ENCODE measurements at regions of chr6 and their contacts with region 1.

Region 1: DNA sequence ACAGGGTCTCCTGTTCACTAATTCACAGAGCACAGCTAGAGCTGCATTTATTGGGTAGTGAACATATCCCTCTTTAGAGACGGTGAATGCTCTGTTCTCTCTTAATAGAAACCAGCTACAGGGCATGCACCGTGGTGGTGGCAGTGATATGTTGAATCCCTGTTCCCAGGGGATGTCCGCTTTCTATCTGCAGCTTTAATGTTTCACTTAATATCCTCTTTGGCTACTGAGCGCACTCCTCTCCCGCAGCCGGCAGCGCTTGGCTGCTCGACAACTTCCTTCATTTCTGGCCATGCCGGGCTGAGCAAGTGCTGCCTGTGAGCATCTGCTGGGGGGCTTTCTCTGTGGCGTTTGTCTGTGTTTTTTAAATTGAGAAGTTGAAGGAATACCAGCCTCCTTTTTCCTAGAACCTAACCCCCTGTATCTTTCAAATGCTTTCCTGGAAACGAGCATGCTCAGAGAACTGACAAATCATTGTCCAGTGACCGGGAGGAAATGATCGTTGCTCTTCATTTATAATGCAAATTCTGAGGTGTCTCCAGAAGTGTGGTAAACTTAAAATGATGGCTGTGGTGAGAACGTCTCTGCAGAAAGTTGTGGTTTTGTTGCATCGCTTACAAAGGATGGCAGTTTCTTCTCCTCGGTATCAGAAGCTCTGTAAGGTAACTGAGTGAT is 297.9 kb downstream of the UTRN start:
- DNase-seq: peak; percentile 58
- H3K4me3 Mint-ChIP-seq: peak overlapping the region; percentile 82
- H3K27ac Mint-ChIP-seq: peak overlapping the region; percentile 91
- H3K4me1 Mint-ChIP-seq: peaks cover 55% of the 10 kb centered on the region
- H3K27me3 Mint-ChIP-seq: no peaks in the 10 kb centered on the region

Region 2: GRCh38 chr6:144349690-144350527 is 233.2 kb before region 1 on chr6:
- intact Hi-C with region 1: loop called (anchors 5 kb)
- DNase-seq: no peak
- H3K4me3 Mint-ChIP-seq: peak overlapping the region; percentile 83
- H3K27ac Mint-ChIP-seq: peak overlapping the region; percentile 94
- H3K4me1 Mint-ChIP-seq: peaks cover 89% of the 10 kb centered on the region
- H3K27me3 Mint-ChIP-seq: no peaks in the 10 kb centered on the region

Region 3: DNA sequence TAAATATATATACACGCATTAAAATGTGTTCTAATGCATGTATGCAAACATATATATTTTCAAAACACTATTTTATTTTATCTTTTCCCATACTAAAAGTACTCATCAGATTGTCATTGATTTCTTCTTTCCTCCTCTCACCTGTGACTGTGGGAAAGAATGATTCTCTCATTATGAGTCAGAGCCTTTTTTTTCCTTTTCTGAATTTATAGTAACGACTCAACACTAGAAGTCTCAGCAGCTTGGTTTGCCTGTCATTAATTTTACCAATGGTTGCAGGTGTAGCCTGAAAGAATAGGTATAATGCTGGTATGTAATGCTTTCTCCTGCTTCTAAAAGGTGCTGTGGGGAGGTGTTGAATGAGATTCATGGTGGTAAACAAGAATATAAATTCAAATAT is 30.8 kb after region 1 on chr6:
- intact Hi-C with region 1: loop called (anchors 2 kb)
- DNase-seq: no peak
- H3K4me3 Mint-ChIP-seq: no peak overlapping the region
- H3K27ac Mint-ChIP-seq: no peak overlapping the region
- H3K4me1 Mint-ChIP-seq: peaks cover 31% of the 10 kb centered on the region
- H3K27me3 Mint-ChIP-seq: peaks cover 3% of the 10 kb centered on the region

Region 4: GRCh38 chr6:144726129-144726522 is 143.1 kb after region 1 on chr6:
- intact Hi-C with region 1: loop called (anchors 5 kb)
- DNase-seq: no peak
- H3K4me3 Mint-ChIP-seq: no peak overlapping the region
- H3K27ac Mint-ChIP-seq: no peak overlapping the region
- H3K4me1 Mint-ChIP-seq: peaks cover 54% of the 10 kb centered on the region
- H3K27me3 Mint-ChIP-seq: no peaks in the 10 kb centered on the region

Region 5: GRCh38 chr6:145015739-145016558 is 432.9 kb after region 1 on chr6:
- intact Hi-C with region 1: loop called (anchors 1 kb)
- DNase-seq: peak; percentile 6
- H3K4me3 Mint-ChIP-seq: peak overlapping the region; percentile 16
- H3K27ac Mint-ChIP-seq: peak overlapping the region; percentile 45
- H3K4me1 Mint-ChIP-seq: peaks cover 27% of the 10 kb centered on the region
- H3K27me3 Mint-ChIP-seq: peaks cover 2% of the 10 kb centered on the region

Region 6: GRCh38 chr6:145633981-145634627 is 1051.0 kb after region 1 on chr6:
- intact Hi-C with region 1: loop called (anchors 2 kb)
- DNase-seq: peak; percentile 52
- H3K4me3 Mint-ChIP-seq: no peak overlapping the region
- H3K27ac Mint-ChIP-seq: no peak overlapping the region
- H3K4me1 Mint-ChIP-seq: peaks cover 9% of the 10 kb centered on the region
- H3K27me3 Mint-ChIP-seq: peaks cover 5% of the 10 kb centered on the region